SK-N-SH (cell line): ENCODE measurements at regions of chr20 and their contacts with region 1.

Region 1: GRCh38 chr20:5448449-5449118 is 131.8 kb upstream of the PROKR2 start:
- DNase-seq: peak; percentile 81
- H3K4me3 ChIP-seq: peak overlapping the region in 1 of 2 experiments; percentile 21; a peak in 1 of 4 replicates
- H3K27ac ChIP-seq: peak overlapping the region in 1 of 2 experiments; percentile 86; a peak in 2 of 4 replicates
- H3K4me1 ChIP-seq: peaks cover 0 to 15% of the 10 kb centered on the region in 2 experiments; a peak in 2 of 4 replicates
- H3K27me3 ChIP-seq: no peaks in the 10 kb centered on the region
- CTCF ChIP-seq: peak; percentile 76
- EP300 ChIP-seq: no peak
- RAD21 ChIP-seq: peak; percentile 90

Region 2: GRCh38 chr20:5191829-5192569 is 256.6 kb before region 1 on chr20:
- CTCF ChIA-PET with region 1: interaction called, 15 read pairs
- POLR2A ChIA-PET with region 1: no interaction called
- DNase-seq: peak; percentile 74
- H3K4me3 ChIP-seq: no peak overlapping the region
- H3K27ac ChIP-seq: peak overlapping the region in 1 of 2 experiments; percentile 25; a peak in 1 of 4 replicates
- H3K4me1 ChIP-seq: no peaks in the 10 kb centered on the region; a peak in 1 of 4 replicates
- H3K27me3 ChIP-seq: no peaks in the 10 kb centered on the region
- CTCF ChIP-seq: peak; percentile 78
- EP300 ChIP-seq: no peak
- RAD21 ChIP-seq: peak; percentile 97

Region 3: DNA sequence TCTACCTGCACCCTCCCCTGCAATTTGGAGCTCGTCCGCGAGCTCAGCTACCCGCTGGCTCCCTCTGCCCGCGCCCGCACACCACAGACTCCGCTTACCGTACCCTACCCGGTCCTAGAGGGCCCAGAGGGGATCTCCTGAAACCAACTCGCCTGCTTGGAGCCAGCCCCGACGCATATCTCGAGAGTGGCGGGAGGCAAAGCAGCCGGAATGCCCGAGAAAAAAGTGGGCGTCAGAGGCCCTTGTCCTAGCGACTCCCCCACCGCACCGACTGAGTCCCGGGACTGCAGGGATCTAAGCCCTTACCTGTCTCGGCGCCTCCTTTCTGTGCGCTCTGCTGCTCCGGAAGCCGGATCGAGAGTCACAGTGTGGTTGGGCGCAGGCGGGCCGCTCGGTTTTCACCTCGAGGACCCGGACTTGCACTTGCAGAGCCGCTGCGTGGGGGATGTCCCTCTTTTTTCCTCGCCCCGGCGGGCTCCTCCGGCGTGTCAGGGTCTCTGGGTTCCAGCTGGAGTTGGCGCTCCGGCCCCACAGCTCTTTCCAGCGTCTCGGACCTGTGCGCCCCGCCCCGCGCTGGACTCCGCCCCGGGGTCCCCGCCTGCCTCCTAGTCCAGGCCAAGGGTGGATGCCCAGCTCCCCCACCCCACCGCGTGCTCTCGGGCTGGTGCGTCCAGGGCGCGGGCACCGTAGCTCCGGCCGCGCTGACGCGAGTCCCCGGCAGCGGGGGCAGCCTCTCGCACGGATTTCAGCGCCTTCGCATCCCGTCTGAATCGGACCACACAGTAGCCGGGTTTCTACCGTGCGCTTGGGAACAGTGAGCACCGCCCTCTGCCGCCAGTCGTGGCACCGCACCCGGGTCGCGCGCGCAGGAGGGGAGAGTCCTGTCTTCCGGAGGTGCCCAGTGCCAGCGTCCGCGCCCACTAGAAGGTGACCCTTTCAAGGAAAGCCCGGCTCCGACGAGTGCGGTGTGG is 132.1 kb before region 1 on chr20 and contains the start of gene PROKR2:
- CTCF ChIA-PET with region 1: interaction called, 57 read pairs
- POLR2A ChIA-PET with region 1: no interaction called
- DNase-seq: peak; percentile 88
- H3K4me3 ChIP-seq: peak within 1 kb of the TSS in 1 of 2 experiments; percentile 46; a peak in 2 of 4 replicates
- H3K27ac ChIP-seq: peak within 1 kb of the TSS in 1 of 2 experiments; percentile 71; a peak in 1 of 4 replicates
- H3K4me1 ChIP-seq: peaks cover 0 to 40% of the 10 kb centered on the region in 2 experiments; a peak in 1 of 4 replicates
- H3K27me3 ChIP-seq: peaks cover 14% of the 10 kb centered on the region
- CTCF ChIP-seq: no peak
- EP300 ChIP-seq: no peak
- RAD21 ChIP-seq: peak; percentile 58
- polyA plus RNA-seq, gene PROKR2: 0.13 and 0.44 TPM in 2 replicates

Region 4: GRCh38 chr20:5402903-5403531 is 45.6 kb before region 1 on chr20:
- CTCF ChIA-PET with region 1: interaction called, 50 read pairs
- POLR2A ChIA-PET with region 1: no interaction called
- DNase-seq: no peak
- H3K4me3 ChIP-seq: no peak overlapping the region; a peak in 1 of 4 replicates
- H3K27ac ChIP-seq: no peak overlapping the region; a peak in 1 of 4 replicates
- H3K4me1 ChIP-seq: peaks cover 0 to 12% of the 10 kb centered on the region in 2 experiments; a peak in 2 of 4 replicates
- H3K27me3 ChIP-seq: no peaks in the 10 kb centered on the region
- CTCF ChIP-seq: peak; percentile 53
- EP300 ChIP-seq: no peak
- RAD21 ChIP-seq: peak; percentile 38

Region 5: GRCh38 chr20:5416086-5416485 is 32.5 kb before region 1 on chr20:
- CTCF ChIA-PET with region 1: interaction called, 27 read pairs
- POLR2A ChIA-PET with region 1: interaction called, 4 read pairs
- DNase-seq: no peak
- H3K4me3 ChIP-seq: no peak overlapping the region
- H3K27ac ChIP-seq: peak overlapping the region in 1 of 2 experiments; percentile 53; a peak in 1 of 4 replicates
- H3K4me1 ChIP-seq: peaks cover 0 to 30% of the 10 kb centered on the region in 2 experiments; a peak in 2 of 4 replicates
- H3K27me3 ChIP-seq: no peaks in the 10 kb centered on the region
- CTCF ChIP-seq: no peak
- EP300 ChIP-seq: no peak
- RAD21 ChIP-seq: no peak

Region 6: DNA sequence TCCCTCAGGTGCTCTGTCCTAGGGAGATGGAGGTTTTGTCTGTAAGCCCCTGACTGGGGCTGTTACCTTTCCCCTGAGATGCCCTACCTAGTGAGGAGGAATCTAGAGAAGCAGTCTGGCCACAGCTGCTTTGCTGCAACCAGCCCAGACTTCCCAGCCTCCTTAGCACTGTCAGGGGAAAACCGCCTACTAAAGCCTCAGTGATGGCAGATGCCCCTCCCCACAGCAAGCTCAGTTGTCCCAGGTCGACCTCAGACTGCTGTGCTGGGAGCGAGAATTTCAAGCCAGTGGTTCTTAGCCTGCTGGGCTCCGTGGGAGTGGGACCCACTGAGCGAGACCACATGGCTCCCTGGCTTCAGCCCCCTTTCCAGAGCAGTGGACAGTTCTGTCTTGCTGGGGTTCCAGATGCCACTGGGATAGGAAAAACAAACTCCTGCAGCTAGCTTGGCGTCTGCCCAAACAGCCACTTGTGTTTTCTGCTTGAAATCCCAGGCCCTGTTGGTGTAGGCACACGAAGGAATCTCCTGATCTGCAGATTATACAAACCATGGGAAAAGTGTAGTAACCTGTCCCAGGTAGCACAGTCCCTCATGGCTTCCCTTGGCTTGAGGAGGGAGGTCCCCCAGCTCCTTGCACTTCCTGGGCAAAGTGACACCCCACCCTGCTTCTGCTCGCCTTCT is 14.6 kb after region 1 on chr20:
- CTCF ChIA-PET with region 1: interaction called, 21 read pairs
- POLR2A ChIA-PET with region 1: no interaction called
- DNase-seq: no peak
- H3K4me3 ChIP-seq: no peak overlapping the region
- H3K27ac ChIP-seq: no peak overlapping the region; a peak in 1 of 4 replicates
- H3K4me1 ChIP-seq: peaks cover 0 to 10% of the 10 kb centered on the region in 2 experiments; a peak in 1 of 4 replicates
- H3K27me3 ChIP-seq: no peaks in the 10 kb centered on the region
- CTCF ChIP-seq: no peak
- EP300 ChIP-seq: no peak
- RAD21 ChIP-seq: no peak